K562 (cell line): ENCODE measurements at regions of chr3 and their contacts with region 1.

Region 1: GRCh38 chr3:129016356-129016719 is 15.2 kb downstream of the EFCC1 start:
- DNase-seq: no peak
- ATAC-seq: no peak
- H3K4me3 ChIP-seq: no peak overlapping the region
- H3K27ac ChIP-seq: peak overlapping the region; percentile 62
- H3K4me1 ChIP-seq: peaks cover 24 to 36% of the 10 kb centered on the region in 2 experiments
- H3K27me3 ChIP-seq: no peaks in the 10 kb centered on the region
- CTCF ChIP-seq: no peak; a peak in 1 of 6 replicates
- EP300 ChIP-seq: no peak
- POLR2A ChIP-seq: no peak
- RAD21 ChIP-seq: no peak

Region 2: DNA sequence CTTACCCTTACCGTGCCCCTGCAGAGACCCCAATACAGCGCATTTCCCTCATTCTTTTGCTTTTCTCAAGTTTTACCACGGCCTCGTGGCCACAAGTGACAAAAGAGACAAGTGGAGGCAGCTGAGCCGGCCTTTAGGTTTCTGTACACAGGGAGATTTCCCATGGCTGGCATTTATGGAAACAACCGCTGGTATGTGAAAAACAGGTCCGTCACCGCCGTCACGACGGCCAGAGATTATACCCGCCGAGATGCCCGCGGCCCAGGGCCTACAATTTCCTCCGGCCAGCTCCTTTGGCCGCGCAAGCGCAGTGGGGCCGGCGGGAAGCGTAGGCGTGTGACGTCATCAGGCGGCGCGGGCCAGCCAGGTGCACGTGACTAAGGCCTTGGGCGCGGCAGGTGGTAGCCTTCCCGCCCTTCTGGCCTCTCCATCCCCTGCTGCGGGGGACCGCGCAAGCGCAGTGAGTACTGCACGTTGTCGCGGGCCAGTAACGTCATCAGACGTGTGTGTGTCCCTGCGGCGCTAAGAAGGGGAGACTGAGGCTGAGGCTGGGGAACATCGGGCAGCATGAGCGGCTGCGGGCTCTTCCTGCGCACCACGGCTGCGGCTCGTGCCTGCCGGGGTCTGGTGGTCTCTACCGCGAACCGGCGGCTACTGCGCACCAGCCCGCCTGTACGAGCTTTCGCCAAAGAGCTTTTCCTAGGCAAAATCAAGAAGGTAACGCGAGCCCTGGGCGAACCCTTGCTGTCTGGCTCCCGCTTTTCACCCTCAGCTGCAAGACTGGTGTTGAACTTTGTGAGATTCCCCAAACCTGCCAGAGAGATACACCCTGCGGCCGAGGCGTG is 137.0 kb before region 1 on chr3 and contains the start of gene ACAD9:
- CTCF ChIA-PET with region 1: no interaction called
- POLR2A ChIA-PET with region 1: no interaction called
- in situ Hi-C with region 1: no loop called
- intact Hi-C with region 1: loop called (anchors 5 kb)
- DNase-seq: peak; percentile 96 to 97 (median 96)
- ATAC-seq: peak; percentile 87
- H3K4me3 ChIP-seq: peak within 1 kb of the TSS; percentile 74
- H3K27ac ChIP-seq: peak within 1 kb of the TSS; percentile 98
- H3K4me1 ChIP-seq: peaks cover 6 to 12% of the 10 kb centered on the region in 2 experiments; a peak in 3 of 5 replicates
- H3K27me3 ChIP-seq: no peaks in the 10 kb centered on the region
- CTCF ChIP-seq: no peak; a peak in 1 of 6 replicates
- EP300 ChIP-seq: no peak
- POLR2A ChIP-seq: peak; percentile 89
- RAD21 ChIP-seq: no peak
- polyA plus RNA-seq, gene ACAD9: 10.2 to 11.2 TPM

Region 3: DNA sequence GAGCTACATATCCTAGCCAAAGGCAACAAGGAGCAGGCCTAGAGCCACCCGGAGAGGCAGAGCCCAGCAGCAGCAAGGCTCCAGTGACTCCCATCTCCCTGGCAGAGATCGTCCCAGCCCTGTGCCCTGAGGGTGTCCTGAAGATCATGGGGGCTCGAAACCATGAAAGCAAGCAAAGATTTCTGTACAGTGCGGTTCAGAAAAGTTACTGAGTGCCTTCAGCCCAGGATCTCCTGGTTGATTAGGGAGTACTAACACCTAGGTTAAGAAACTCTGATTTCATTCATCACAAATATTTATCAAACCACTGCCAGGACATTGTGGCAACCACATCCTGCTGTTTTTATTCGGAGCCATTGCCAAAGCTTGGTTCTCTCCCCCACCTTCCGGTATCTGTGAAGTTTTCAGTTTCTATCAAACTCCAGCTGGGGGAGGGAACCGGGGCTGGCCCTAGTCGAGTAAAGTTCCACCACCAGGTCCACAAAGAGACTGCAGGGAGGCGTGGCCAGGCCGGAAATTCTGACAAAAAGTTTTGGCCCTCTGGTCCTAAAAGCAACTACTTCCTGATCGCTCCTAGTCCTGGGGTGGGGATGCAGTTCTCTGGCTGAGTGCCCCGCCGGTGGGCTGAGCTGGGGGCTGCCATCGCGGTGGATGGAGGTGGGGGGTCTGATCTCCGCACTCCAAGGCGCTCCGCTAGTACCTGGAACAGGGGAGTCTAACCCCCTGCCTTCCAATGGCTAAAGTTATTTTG is 104.1 kb after region 1 on chr3:
- CTCF ChIA-PET with region 1: no interaction called
- POLR2A ChIA-PET with region 1: no interaction called
- in situ Hi-C with region 1: no loop called
- intact Hi-C with region 1: no loop called
- DNase-seq: peak; percentile 61 to 88 (median 70)
- ATAC-seq: peak; percentile 76
- H3K4me3 ChIP-seq: peak overlapping the region; percentile 58
- H3K27ac ChIP-seq: peak overlapping the region; percentile 75
- H3K4me1 ChIP-seq: peaks cover 22 to 30% of the 10 kb centered on the region in 2 experiments
- H3K27me3 ChIP-seq: no peaks in the 10 kb centered on the region
- CTCF ChIP-seq: peak; percentile 28 to 54 (median 36); a peak in 4 of 6 replicates
- EP300 ChIP-seq: peak; percentile 23; the same call in 1 of the 2 replicates
- POLR2A ChIP-seq: 0 out of 2 replicates have a peak, but pooled peaks have one; percentile 52
- RAD21 ChIP-seq: no peak